Activated CD4-positive, alpha-beta T cell treated with anti-CD3 and anti-CD28 coated beads, Interleukin-2, amount 10 ng/mL, durations not matched to agents 24 days and 14 days (primary cell): ENCODE measurements at regions of chr19 and their contacts with region 1.

Region 1: DNA sequence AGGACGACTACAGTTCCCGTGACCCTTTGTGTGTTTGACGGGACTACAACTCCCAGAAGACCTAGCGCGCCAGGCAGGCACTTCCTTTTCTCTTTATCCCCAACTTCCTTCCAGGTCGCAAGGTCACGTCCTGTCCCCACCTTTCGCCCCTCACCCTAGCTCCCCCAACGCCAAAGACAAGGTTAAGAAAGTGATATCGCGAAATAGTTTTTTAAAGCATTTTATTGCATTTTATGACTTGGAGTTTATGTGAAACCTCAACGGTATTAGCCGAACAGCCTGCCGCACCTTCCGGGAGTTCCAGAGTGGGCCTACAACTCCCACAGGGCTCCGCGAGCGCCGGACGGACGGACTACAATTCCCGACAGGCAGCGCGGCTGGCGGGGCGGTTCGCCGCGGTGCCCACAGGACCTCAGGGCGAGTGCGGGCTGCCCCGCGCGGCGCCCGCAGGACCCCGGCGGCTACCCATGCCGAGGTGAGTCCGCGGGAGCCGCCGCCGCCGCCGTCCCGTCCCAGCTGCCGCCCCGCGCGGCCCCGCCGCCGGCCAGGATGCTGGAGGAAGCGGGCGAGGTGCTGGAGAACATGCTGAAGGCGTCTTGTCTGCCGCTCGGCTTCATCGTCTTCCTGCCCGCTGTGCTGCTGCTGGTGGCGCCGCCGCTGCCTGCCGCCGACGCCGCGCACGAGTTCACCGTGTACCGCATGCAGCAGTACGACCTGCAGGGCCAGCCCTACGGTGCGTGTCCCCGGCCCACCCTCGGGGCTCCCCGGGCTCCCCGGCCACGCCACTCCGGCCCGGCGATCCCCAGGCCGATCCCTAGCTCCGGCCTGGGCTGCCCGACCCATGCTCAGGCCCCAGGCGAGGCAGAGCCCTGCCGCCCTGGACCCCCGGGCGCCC is at the start of gene NCLN:
- DNase-seq: peak; percentile 98
- H3K4me3 Mint-ChIP-seq: peak within 1 kb of the TSS; percentile 96
- H3K27ac Mint-ChIP-seq: peak within 1 kb of the TSS; percentile 91
- H3K4me1 Mint-ChIP-seq: peaks cover 42% of the 10 kb centered on the region
- H3K27me3 Mint-ChIP-seq: no peaks in the 10 kb centered on the region
- total RNA-seq, gene NCLN: 114 and 116 TPM in 2 replicates

Region 2: GRCh38 chr19:2950286-2951124 is 235.2 kb before region 1 on chr19:
- intact Hi-C with region 1: loop called (anchors 10 kb)
- DNase-seq: peak; percentile 100
- H3K4me3 Mint-ChIP-seq: peak overlapping the region; percentile 96
- H3K27ac Mint-ChIP-seq: peak overlapping the region; percentile 95
- H3K4me1 Mint-ChIP-seq: peaks cover 12% of the 10 kb centered on the region
- H3K27me3 Mint-ChIP-seq: no peaks in the 10 kb centered on the region

Region 3: GRCh38 chr19:3062168-3063102 is 123.3 kb before region 1 on chr19 and contains the start of gene TLE5:
- intact Hi-C with region 1: loop called (anchors 5 kb)
- DNase-seq: peak; percentile 92
- H3K4me3 Mint-ChIP-seq: peak within 1 kb of the TSS; percentile 89
- H3K27ac Mint-ChIP-seq: peak within 1 kb of the TSS; percentile 98
- H3K4me1 Mint-ChIP-seq: peaks cover 24% of the 10 kb centered on the region
- H3K27me3 Mint-ChIP-seq: no peaks in the 10 kb centered on the region
- total RNA-seq, gene TLE5: 380 and 392 TPM in 2 replicates

Region 4: GRCh38 chr19:3210347-3211017 is 24.8 kb after region 1 on chr19:
- intact Hi-C with region 1: no loop called
- DNase-seq: peak; percentile 90
- H3K4me3 Mint-ChIP-seq: no peak overlapping the region
- H3K27ac Mint-ChIP-seq: peak overlapping the region; percentile 37
- H3K4me1 Mint-ChIP-seq: no peaks in the 10 kb centered on the region
- H3K27me3 Mint-ChIP-seq: no peaks in the 10 kb centered on the region

Region 5: DNA sequence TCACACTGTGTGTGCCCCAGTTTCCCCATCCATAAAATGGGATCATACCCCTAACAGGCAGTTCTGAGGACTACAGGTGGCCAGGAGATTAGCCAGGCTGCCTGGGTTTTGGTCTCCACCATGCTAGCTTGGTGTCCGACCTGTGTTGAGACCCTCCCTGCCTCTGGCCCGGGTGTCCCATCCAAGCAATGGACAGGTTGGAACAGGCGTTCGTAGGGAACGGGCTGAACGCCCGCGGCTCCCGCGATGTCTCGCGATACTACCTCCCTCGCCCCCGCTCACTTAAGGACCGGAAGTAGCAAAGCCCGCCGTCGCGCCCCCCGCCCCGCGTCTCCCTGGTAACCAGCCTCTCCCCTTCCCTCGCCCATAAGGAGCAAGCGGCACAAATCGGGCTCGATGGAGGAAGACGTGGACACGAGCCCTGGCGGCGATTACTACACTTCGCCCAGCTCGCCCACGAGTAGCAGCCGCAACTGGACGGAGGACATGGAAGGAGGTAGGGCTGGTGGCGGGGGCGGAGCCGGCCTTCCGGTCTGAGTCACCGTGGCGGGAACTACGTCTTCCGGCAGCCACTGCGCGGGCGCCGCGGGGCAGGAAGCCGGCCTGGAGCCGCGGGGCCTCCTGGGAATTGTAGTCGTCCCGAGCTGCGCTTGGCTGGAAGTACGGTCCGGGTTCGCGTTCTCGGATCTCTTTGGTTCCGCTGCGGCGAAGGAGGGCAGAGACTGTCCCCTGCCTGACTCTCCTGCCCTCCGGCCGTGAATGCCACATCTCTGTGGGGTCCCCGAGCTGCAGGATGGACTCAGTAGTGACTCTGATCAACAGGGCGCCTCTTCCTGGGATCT is 249.2 kb after region 1 on chr19:
- intact Hi-C with region 1: loop called (anchors 10 kb)
- DNase-seq: peak; percentile 98
- H3K4me3 Mint-ChIP-seq: peak overlapping the region; percentile 96
- H3K27ac Mint-ChIP-seq: peak overlapping the region; percentile 99
- H3K4me1 Mint-ChIP-seq: peaks cover 16% of the 10 kb centered on the region
- H3K27me3 Mint-ChIP-seq: no peaks in the 10 kb centered on the region